ENCODE measurements at regions of chr11 and their contacts with region 1.

Region 1: GRCh38 chr11:44727373-44728287 is 868 bp downstream of the TSPAN18 start:
- DNase-seq: peak; percentile 87 to 92
- ATAC-seq: peak; percentile 83 to 92 (median 90)
- H3K4me3 ChIP-seq: peak overlapping the region; percentile 39 to 98 (median 84)
- H3K27ac ChIP-seq: peak overlapping the region; percentile 84 to 95 (median 92)
- H3K4me1 ChIP-seq: peaks cover 13 to 68% (median 59%) of the 10 kb centered on the region in 9 donors
- H3K27me3 ChIP-seq: peaks cover 0 to 35% (median 0%) of the 10 kb centered on the region in 7 donors
- CTCF ChIP-seq: peak; percentile 90 to 98 (median 96)

Region 2: DNA sequence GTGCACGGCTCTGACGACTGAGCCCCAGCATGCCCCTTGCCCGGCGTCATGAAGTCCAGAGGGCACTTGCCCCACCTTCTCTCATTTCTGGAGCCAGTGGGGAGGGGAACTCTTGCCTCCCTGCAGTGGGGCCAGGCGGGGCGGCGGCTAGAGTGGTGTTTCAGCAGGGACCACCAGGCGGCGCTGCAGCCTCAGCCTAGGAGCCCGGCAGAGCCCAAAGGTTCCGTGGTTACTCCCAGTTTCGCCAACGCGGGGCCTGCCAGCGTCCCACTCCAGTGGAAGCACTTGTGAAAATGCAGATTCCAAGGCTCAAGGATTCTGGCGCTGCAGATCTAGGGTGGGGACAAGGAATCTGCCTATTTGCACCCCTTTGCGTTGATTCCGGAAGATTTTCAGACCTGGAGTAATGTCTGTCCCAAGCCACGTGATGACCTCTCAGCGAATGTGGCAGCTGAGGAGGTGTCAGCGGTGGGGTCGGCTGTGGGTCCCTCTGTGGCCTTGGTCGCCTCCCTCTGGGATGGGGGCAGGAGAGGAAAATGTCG is 106.4 kb before region 1 on chr11:
- intact Hi-C with region 1: loop called in 6 of 10 experiments (anchors 2 to 10 kb)
- DNase-seq: peak; percentile 76 to 83
- ATAC-seq: peak; percentile 62 to 82 (median 70)
- H3K4me3 ChIP-seq: peak overlapping the region in 6 of 10 donors; percentile 10 to 39 (median 33)
- H3K27ac ChIP-seq: no peak overlapping the region
- H3K4me1 ChIP-seq: peaks cover 12 to 54% (median 37%) of the 10 kb centered on the region in 9 donors
- H3K27me3 ChIP-seq: no peaks in the 10 kb centered on the region
- CTCF ChIP-seq: peak; percentile 97 to 99 (median 98)

Region 3: DNA sequence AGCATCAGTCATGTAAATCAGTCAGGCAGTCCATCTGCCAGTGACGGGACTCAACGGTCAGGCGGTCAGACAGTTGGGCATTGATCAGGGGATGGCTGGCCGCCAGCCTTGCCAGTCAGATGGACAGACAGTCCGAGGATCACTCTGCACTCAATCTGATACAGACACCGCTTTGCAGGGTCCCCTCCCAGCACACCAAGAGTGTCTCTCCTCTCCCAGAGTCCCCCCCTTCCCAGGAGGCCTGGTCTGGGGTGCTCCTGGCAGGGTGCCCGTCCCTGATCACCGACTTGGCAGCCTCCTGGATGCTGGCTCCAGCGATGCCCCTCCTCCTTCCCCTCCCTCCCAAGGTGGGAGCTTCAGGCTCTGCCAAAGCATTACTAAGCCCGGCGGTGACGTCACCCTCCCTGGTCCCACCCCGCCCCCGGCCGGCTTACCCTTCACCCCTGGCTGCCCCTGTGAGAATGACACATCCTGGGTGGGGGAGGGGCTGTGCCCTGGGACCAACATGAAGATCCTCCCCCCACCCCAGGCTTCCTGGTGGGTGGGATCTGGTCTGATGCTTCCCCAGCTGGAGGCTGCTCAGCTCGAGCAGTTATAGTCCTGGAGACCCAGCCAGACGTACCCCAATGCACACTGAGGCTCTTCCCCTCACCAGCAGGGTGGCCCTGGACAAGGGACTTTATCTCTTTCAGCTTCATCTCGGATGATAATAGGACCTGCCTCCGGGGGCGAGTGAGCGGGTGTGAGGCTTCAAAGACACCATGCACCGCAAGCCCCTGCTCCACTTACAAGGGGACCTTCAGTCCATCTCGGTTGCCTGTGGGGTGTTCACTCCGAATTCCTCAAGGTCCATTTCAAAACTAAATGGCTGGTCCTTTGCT is 93.0 kb before region 1 on chr11:
- intact Hi-C with region 1: loop called in 5 of 10 experiments (anchors 2 to 10 kb)
- DNase-seq: peak; percentile 72 to 83
- ATAC-seq: peak; percentile 67 to 89 (median 82)
- H3K4me3 ChIP-seq: peak overlapping the region in 1 of 10 donors; percentile 26
- H3K27ac ChIP-seq: peak overlapping the region in 3 of 10 donors; percentile 14 to 62 (median 45)
- H3K4me1 ChIP-seq: peaks cover 10 to 52% (median 36%) of the 10 kb centered on the region in 9 donors
- H3K27me3 ChIP-seq: no peaks in the 10 kb centered on the region
- CTCF ChIP-seq: no peak

Region 4: GRCh38 chr11:44760917-44761550 is 33.4 kb after region 1 on chr11:
- intact Hi-C with region 1: loop called in 1 of 10 experiments (anchors 5 kb)
- DNase-seq: peak in 1 of 2 donors; percentile 79
- ATAC-seq: peak; percentile 84 to 94 (median 92)
- H3K4me3 ChIP-seq: no peak overlapping the region
- H3K27ac ChIP-seq: peak overlapping the region; percentile 59 to 92 (median 89)
- H3K4me1 ChIP-seq: peaks cover 20 to 84% (median 66%) of the 10 kb centered on the region in 9 donors
- H3K27me3 ChIP-seq: no peaks in the 10 kb centered on the region
- CTCF ChIP-seq: peak in 6 of 9 donors; percentile 4 to 36 (median 18)

Region 5: GRCh38 chr11:44814881-44815592 is 87.4 kb after region 1 on chr11:
- intact Hi-C with region 1: loop called in 1 of 10 experiments (anchors 5 kb)
- DNase-seq: no peak
- ATAC-seq: peak in 2 of 8 donors; percentile 22 to 23
- H3K4me3 ChIP-seq: no peak overlapping the region
- H3K27ac ChIP-seq: peak overlapping the region in 7 of 10 donors; percentile 29 to 72 (median 42)
- H3K4me1 ChIP-seq: peaks cover 18 to 100% (median 81%) of the 10 kb centered on the region in 9 donors
- H3K27me3 ChIP-seq: no peaks in the 10 kb centered on the region
- CTCF ChIP-seq: no peak

Region 6: GRCh38 chr11:44899959-44900358 is 172.3 kb after region 1 on chr11:
- intact Hi-C with region 1: loop called in 4 of 10 experiments (anchors 2 to 10 kb)
- DNase-seq: no peak
- ATAC-seq: peak in 6 of 8 donors; percentile 40 to 56 (median 48)
- H3K4me3 ChIP-seq: no peak overlapping the region
- H3K27ac ChIP-seq: no peak overlapping the region
- H3K4me1 ChIP-seq: peaks cover 0 to 12% (median 0%) of the 10 kb centered on the region in 9 donors
- H3K27me3 ChIP-seq: no peaks in the 10 kb centered on the region
- CTCF ChIP-seq: no peak

Region 7: GRCh38 chr11:45102810-45103621 is 375.4 kb after region 1 on chr11:
- intact Hi-C with region 1: loop called in 1 of 10 experiments (anchors 5 kb)
- DNase-seq: peak; percentile 57 to 62
- ATAC-seq: peak; percentile 34 to 87 (median 68)
- H3K4me3 ChIP-seq: no peak overlapping the region
- H3K27ac ChIP-seq: peak overlapping the region in 4 of 10 donors; percentile 17 to 69 (median 30)
- H3K4me1 ChIP-seq: peaks cover 0 to 25% (median 11%) of the 10 kb centered on the region in 9 donors
- H3K27me3 ChIP-seq: peaks cover 0 to 7% (median 0%) of the 10 kb centered on the region in 7 donors
- CTCF ChIP-seq: peak; percentile 87 to 98 (median 97)

Measured in heart right ventricle (tissue), 16 donors.